Right cardiac atrium (tissue), 5 donors: ENCODE measurements at regions of chr19 and their contacts with region 1.

Region 1: GRCh38 chr19:43534816-43535761 is 2.1 kb downstream of the ZNF575 start:
- DNase-seq: peak; percentile 80 to 90 (median 88)
- ATAC-seq: peak; percentile 1 to 13
- H3K4me3 ChIP-seq: no peak overlapping the region
- H3K27ac ChIP-seq: no peak overlapping the region
- H3K4me1 ChIP-seq: no peaks in the 10 kb centered on the region
- H3K27me3 ChIP-seq: no peaks in the 10 kb centered on the region

Region 2: GRCh38 chr19:43658494-43658893 is 123.4 kb after region 1 on chr19:
- intact Hi-C with region 1: loop called in 2 of 4 experiments (anchors 5 kb)
- DNase-seq: no peak
- ATAC-seq: no peak
- H3K4me3 ChIP-seq: no peak overlapping the region
- H3K27ac ChIP-seq: no peak overlapping the region
- H3K4me1 ChIP-seq: no peaks in the 10 kb centered on the region
- H3K27me3 ChIP-seq: no peaks in the 10 kb centered on the region